ENCODE measurements at regions of chr13 and their contacts with region 1.

Region 1: GRCh38 chr13:40624383-40624782 is 42.1 kb downstream of the FOXO1 start:
- DNase-seq: peak in 1 of 9 donors; percentile 52
- ATAC-seq: peak; percentile 43
- H3K4me3 ChIP-seq: no peak overlapping the region
- H3K4me3 Mint-ChIP-seq: peak overlapping the region in 9 of 10 donors; percentile 39 to 74 (median 53)
- H3K27ac ChIP-seq: peak overlapping the region; percentile 37
- H3K27ac Mint-ChIP-seq: peak overlapping the region in 8 of 9 donors; percentile 33 to 88 (median 64)
- H3K4me1 ChIP-seq: peaks cover 25 to 61% of the 10 kb centered on the region in 2 donors
- H3K4me1 Mint-ChIP-seq: peaks cover 59 to 100% (median 92%) of the 10 kb centered on the region in 7 donors
- H3K27me3 ChIP-seq: no peaks in the 10 kb centered on the region
- H3K27me3 Mint-ChIP-seq: no peaks in the 10 kb centered on the region

Region 2: GRCh38 chr13:39815345-39816111 is 808.9 kb before region 1 on chr13:
- CTCF ChIA-PET with region 1: no interaction called
- POLR2A ChIA-PET with region 1: no interaction called
- intact Hi-C with region 1: no loop called
- DNase-seq: no peak
- ATAC-seq: no peak
- H3K4me3 ChIP-seq: no peak overlapping the region
- H3K4me3 Mint-ChIP-seq: no peak overlapping the region
- H3K27ac ChIP-seq: no peak overlapping the region
- H3K27ac Mint-ChIP-seq: no peak overlapping the region
- H3K4me1 ChIP-seq: no peaks in the 10 kb centered on the region
- H3K4me1 Mint-ChIP-seq: peaks cover 0 to 2% (median 0%) of the 10 kb centered on the region in 7 donors
- H3K27me3 ChIP-seq: no peaks in the 10 kb centered on the region
- H3K27me3 Mint-ChIP-seq: peaks cover 0 to 3% (median 0%) of the 10 kb centered on the region in 5 donors

Region 3: GRCh38 chr13:40639221-40639681 is 14.9 kb after region 1 on chr13:
- CTCF ChIA-PET with region 1: no interaction called
- POLR2A ChIA-PET with region 1: interaction called, 7 read pairs
- intact Hi-C with region 1: loop called in 1 of 2 experiments (anchors 1 kb)
- DNase-seq: no peak
- ATAC-seq: peak; percentile 73
- H3K4me3 ChIP-seq: no peak overlapping the region
- H3K4me3 Mint-ChIP-seq: peak overlapping the region in 7 of 10 donors; percentile 18 to 81 (median 66)
- H3K27ac ChIP-seq: no peak overlapping the region
- H3K27ac Mint-ChIP-seq: peak overlapping the region; percentile 22 to 88 (median 73)
- H3K4me1 ChIP-seq: peaks cover 33 to 71% of the 10 kb centered on the region in 2 donors
- H3K4me1 Mint-ChIP-seq: peaks cover 66 to 98% (median 89%) of the 10 kb centered on the region in 7 donors
- H3K27me3 ChIP-seq: no peaks in the 10 kb centered on the region
- H3K27me3 Mint-ChIP-seq: no peaks in the 10 kb centered on the region

Region 4: DNA sequence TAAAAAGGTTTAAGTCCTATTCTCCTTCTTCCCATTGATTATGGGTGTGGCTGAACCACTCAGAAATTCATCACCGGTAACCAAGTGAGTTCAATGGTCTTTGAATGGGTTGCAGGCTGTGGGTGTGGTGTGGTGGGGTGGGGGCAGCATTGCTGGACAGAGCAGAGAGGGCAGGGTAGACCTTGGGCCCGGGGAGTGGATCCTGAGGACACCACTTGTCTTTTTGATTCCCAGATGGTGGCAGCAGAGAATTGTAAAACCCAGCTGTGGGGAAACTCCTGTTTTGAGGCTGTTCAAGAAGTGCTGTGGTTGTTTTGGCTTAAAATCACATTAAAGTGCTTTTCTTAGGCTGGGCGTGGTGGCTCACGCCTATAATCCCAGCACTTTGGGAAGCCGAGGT is 787.1 kb after region 1 on chr13:
- CTCF ChIA-PET with region 1: no interaction called
- POLR2A ChIA-PET with region 1: no interaction called
- intact Hi-C with region 1: no loop called
- DNase-seq: peak in 6 of 9 donors; percentile 17 to 54 (median 28)
- ATAC-seq: peak; percentile 48
- H3K4me3 ChIP-seq: no peak overlapping the region
- H3K4me3 Mint-ChIP-seq: no peak overlapping the region
- H3K27ac ChIP-seq: no peak overlapping the region
- H3K27ac Mint-ChIP-seq: peak overlapping the region in 2 of 9 donors; percentile 36 to 66
- H3K4me1 ChIP-seq: no peaks in the 10 kb centered on the region
- H3K4me1 Mint-ChIP-seq: peaks cover 0 to 4% (median 0%) of the 10 kb centered on the region in 7 donors
- H3K27me3 ChIP-seq: no peaks in the 10 kb centered on the region
- H3K27me3 Mint-ChIP-seq: peaks cover 0 to 13% (median 0%) of the 10 kb centered on the region in 5 donors

Measured in naive thymus-derived CD4-positive, alpha-beta T cell (primary cell).